Heart right ventricle (tissue), 16 donors: ENCODE measurements at regions of chr10 and their contacts with region 1.

Region 1: DNA sequence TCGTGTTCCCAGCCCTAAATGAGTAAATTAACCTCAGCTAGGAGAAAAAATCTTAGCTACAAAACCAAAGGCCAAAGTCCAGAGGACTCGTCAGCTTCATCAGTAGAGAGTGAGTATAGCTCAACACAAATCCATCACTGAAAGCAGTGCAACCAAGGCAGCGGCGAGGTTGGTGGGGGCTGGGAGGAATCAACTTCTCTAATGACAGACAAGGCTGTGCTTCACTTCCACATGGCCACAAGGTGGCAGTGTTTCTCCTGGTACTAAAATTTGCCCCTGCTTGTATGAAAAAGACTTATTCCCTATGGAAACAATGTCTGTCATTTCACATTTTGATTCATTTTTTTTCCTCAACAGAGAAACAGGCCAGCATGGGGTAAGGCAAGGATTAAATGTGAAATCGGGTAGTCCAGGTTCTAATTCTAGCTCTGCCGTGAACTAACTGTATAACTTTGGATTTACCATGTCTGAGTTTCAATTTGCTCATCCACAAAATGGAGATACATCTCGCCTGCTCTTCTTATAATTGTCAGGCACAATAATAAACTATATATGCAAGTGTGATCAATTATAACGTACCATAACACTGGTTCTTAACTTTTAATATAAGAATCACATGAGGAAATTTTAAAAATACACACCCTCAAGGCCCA is 39.3 kb downstream of the FAS start:
- DNase-seq: peak; percentile 56 to 87
- ATAC-seq: peak; percentile 60 to 81 (median 72)
- H3K4me3 ChIP-seq: no peak overlapping the region
- H3K27ac ChIP-seq: peak overlapping the region in 2 of 10 donors; percentile 15 to 51
- H3K4me1 ChIP-seq: peaks cover 0 to 38% (median 12%) of the 10 kb centered on the region in 9 donors
- H3K27me3 ChIP-seq: no peaks in the 10 kb centered on the region
- CTCF ChIP-seq: peak; percentile 86 to 96 (median 90)

Region 2: GRCh38 chr10:88952647-88953111 is 77.2 kb before region 1 on chr10 and contains the start of gene ACTA2:
- intact Hi-C with region 1: no loop called
- DNase-seq: peak; percentile 42 to 53
- ATAC-seq: peak; percentile 43 to 81 (median 68)
- H3K4me3 ChIP-seq: peak within 1 kb of the TSS in 9 of 10 donors; percentile 14 to 53 (median 35)
- H3K27ac ChIP-seq: peak within 1 kb of the TSS; percentile 13 to 89 (median 75)
- H3K4me1 ChIP-seq: peaks cover 0 to 37% (median 24%) of the 10 kb centered on the region in 9 donors
- H3K27me3 ChIP-seq: no peaks in the 10 kb centered on the region
- CTCF ChIP-seq: no peak
- total RNA-seq, gene ACTA2: 59.4 to 123 (median 73.7) TPM

Region 3: GRCh38 chr10:89086801-89087521 is 57.0 kb after region 1 on chr10:
- intact Hi-C with region 1: loop called in 1 of 10 experiments (anchors 10 kb)
- DNase-seq: peak; percentile 70 to 85
- ATAC-seq: peak; percentile 90 to 95 (median 94)
- H3K4me3 ChIP-seq: peak overlapping the region in 8 of 10 donors; percentile 1 to 45 (median 22)
- H3K27ac ChIP-seq: peak overlapping the region; percentile 44 to 89 (median 83)
- H3K4me1 ChIP-seq: peaks cover 3 to 62% (median 23%) of the 10 kb centered on the region in 9 donors
- H3K27me3 ChIP-seq: no peaks in the 10 kb centered on the region
- CTCF ChIP-seq: peak in 1 of 9 donors; percentile 10

Region 4: DNA sequence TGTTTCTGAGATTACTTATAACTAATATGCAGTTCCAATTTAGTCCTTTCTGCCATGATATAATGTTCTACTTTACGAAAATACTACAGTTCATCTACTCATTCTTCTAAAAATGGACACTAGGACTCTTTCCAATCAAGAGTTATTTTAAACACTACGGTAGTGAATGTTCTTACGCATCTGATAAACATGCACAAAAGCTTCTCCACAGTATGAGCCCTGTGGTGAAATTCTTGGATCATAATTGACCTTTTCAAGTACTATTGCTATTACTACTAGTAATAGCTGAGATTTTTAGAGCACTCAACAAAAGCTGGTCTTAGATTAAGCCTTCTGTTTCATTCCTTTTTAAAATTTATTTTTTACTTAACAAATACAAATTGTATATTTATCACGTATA is 70.8 kb after region 1 on chr10:
- intact Hi-C with region 1: no loop called
- DNase-seq: no peak
- ATAC-seq: peak in 6 of 8 donors; percentile 63 to 91 (median 80)
- H3K4me3 ChIP-seq: peak overlapping the region in 2 of 10 donors; percentile 5 to 12
- H3K27ac ChIP-seq: peak overlapping the region in 4 of 10 donors; percentile 40 to 48 (median 45)
- H3K4me1 ChIP-seq: peaks cover 0 to 10% (median 0%) of the 10 kb centered on the region in 9 donors
- H3K27me3 ChIP-seq: no peaks in the 10 kb centered on the region
- CTCF ChIP-seq: no peak

Region 5: DNA sequence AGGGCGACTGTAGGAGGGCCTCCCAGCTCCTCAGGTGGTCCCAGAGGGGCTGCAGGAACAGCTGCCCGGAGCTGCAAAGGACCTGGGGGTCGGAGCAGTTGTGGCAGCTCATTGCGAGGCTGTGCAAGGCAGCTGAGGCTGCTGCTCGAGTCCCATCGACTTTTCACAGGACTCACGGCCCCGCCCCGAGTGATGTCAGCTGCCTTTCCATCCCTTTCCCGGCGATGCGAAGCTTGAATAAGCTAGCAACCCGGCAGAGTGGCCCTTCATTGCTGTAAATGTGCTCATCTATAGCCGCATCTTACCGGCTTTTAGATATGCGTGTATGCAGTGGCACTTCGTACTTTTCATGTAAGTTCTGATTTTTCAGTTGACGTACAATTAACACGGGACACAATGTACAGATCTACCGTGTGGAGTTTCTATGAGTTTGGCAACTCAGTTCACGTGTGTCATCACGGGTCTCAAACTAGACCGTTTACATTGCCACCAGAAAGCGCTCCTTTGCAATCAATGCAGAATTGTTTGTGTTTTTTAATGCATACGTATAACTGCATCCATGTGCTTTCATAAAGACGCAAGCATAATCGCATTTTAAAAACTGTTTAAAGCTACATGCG is 177.4 kb after region 1 on chr10 and contains the start of gene CH25H:
- intact Hi-C with region 1: loop called in 7 of 10 experiments (anchors 1 to 2 kb)
- DNase-seq: peak; percentile 72 to 87
- ATAC-seq: peak; percentile 85 to 96 (median 90)
- H3K4me3 ChIP-seq: peak within 1 kb of the TSS; percentile 21 to 67 (median 56)
- H3K27ac ChIP-seq: peak within 1 kb of the TSS; percentile 78 to 93 (median 83)
- H3K4me1 ChIP-seq: peaks cover 0 to 28% (median 20%) of the 10 kb centered on the region in 9 donors
- H3K27me3 ChIP-seq: peaks cover 0 to 88% (median 20%) of the 10 kb centered on the region in 7 donors
- CTCF ChIP-seq: no peak
- total RNA-seq, gene CH25H: 0.31 to 8.8 (median 0.76) TPM in 9 of 10 donors, not detected in the other

Region 6: DNA sequence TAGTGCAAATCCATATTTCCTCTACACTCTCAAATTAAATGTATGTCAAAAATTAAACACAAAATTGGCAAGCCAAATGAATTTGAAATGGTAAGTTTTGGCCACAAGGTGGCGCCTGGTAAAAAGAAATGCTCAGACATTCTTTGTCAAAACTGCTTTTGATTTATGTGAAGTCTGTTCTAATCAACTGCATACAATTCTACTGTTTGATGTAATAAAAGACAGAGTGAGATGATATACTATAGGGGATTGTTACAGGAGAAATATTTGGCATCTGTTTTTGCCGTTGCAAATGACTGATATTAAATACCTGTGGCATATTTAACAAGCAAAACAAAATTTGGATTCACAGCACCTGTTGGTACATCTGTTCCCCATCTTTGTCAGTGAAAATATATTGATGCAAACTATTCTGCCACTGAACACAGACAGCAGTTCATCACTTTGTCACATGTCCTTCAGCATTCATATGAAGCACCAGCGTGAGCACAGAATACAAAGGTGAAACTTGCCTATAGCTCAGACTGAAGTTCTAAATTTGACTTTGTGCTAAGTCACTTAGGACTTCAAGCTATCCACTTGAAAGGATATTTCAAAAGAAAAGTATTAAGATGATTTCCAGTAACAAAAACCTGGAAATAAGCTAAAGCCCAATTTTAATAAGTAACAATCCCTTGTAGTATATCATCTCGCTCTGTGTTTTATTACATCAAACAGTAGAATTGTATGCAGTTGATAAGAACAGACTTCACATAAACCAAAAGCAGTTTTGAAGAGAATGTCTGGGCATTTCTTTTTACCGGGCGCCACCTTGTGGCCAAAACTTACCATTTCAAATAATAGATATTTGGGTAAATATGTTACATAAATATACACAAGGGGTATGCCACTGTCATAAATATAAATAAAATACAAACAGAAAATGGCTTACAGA is 187.4 kb after region 1 on chr10:
- intact Hi-C with region 1: loop called in 5 of 10 experiments (anchors 1 to 2 kb)
- DNase-seq: peak in 1 of 2 donors; percentile 53
- ATAC-seq: peak in 3 of 8 donors; percentile 49 to 69 (median 55)
- H3K4me3 ChIP-seq: peak overlapping the region in 2 of 10 donors; percentile 3 to 4
- H3K27ac ChIP-seq: peak overlapping the region in 8 of 10 donors; percentile 10 to 61 (median 31)
- H3K4me1 ChIP-seq: peaks cover 0 to 16% (median 8%) of the 10 kb centered on the region in 9 donors
- H3K27me3 ChIP-seq: no peaks in the 10 kb centered on the region
- CTCF ChIP-seq: peak; percentile 72 to 87 (median 82)